Transverse colon (tissue), 4 donors: ENCODE measurements at regions of chr19 and their contacts with region 1.

Region 1: GRCh38 chr19:3544742-3545668 is 6.0 kb downstream of the TEKTIP1 start:
- DNase-seq: peak; percentile 80
- H3K4me3 ChIP-seq: no peak overlapping the region
- H3K27ac ChIP-seq: no peak overlapping the region
- H3K4me1 ChIP-seq: no peaks in the 10 kb centered on the region
- H3K27me3 ChIP-seq: no peaks in the 10 kb centered on the region
- CTCF ChIP-seq: peak; percentile 94 to 97 (median 94)
- EP300 ChIP-seq: no peak
- POLR2A ChIP-seq: no peak

Region 2: DNA sequence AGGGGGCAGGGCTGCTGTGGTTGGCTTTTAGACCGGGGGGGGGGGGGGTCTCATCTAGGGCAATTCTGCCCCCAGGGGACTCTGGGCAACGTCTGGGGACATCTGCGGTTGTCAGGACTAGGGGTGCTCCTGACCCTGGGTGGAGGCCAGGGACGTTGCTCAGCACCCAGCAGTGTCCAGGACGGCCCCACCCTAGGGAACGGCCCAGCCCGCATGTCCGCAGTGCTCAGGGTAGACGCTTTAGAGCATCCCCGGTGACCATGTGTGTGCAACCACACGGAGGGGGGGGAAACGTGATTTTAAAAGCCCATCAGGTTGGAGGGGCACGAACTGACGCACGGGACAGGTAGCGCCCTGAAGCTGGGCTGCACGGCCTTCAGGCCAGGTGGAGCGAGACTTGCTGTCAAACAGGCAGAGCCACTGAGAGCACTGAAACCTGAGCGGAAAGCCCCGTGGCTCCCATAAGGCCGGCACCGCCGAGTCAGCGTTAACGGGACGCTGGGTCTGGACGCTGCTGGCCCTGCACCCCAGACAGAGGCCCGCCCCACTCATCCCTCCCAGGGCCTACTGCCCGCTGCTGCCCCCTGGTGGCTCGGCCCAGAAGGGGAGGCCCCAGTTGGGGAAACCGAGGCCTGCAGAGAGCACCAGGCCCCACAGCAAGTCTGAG is 73.3 kb after region 1 on chr19:
- in situ Hi-C with region 1: no loop called
- intact Hi-C with region 1: loop called (anchors 5 kb)
- DNase-seq: peak; percentile 70
- H3K4me3 ChIP-seq: no peak overlapping the region
- H3K27ac ChIP-seq: peak overlapping the region in 2 of 4 donors; percentile 4 to 21
- H3K4me1 ChIP-seq: peaks cover 0 to 15% (median 7%) of the 10 kb centered on the region in 4 donors
- H3K27me3 ChIP-seq: no peaks in the 10 kb centered on the region
- CTCF ChIP-seq: peak; percentile 86 to 95 (median 92)
- EP300 ChIP-seq: no peak
- POLR2A ChIP-seq: no peak

Region 3: DNA sequence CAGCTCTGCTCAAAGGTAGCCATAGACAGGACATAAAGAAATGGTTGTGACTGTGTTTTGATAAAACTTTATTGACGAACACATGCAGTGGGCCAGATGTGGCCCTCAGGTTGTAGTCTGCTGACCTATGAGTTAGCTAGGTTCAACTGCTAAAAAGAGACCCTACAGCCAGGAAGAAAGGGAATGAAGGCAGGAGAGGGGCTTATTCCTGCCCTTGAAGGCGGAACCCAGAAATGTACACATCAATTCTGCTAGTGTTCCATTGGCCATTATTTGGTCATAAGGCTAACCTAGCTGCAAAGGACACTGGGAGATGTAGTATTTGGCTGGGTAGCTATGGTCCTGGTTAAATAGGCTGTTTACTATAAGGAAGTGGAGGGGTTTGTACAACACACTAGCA is 198.5 kb after region 1 on chr19:
- in situ Hi-C with region 1: no loop called
- intact Hi-C with region 1: no loop called
- DNase-seq: no peak
- H3K4me3 ChIP-seq: no peak overlapping the region
- H3K27ac ChIP-seq: no peak overlapping the region
- H3K4me1 ChIP-seq: no peaks in the 10 kb centered on the region
- H3K27me3 ChIP-seq: no peaks in the 10 kb centered on the region
- CTCF ChIP-seq: no peak
- EP300 ChIP-seq: no peak
- POLR2A ChIP-seq: no peak